ENCODE measurements at regions of chr1 and their contacts with region 1.

Region 1: GRCh38 chr1:112565800-112566199 is 53.1 kb downstream of the ST7L start:
- DNase-seq: no peak
- H3K4me3 ChIP-seq: no peak overlapping the region
- H3K27ac ChIP-seq: no peak overlapping the region
- H3K4me1 ChIP-seq: no peaks in the 10 kb centered on the region
- H3K27me3 ChIP-seq: no peaks in the 10 kb centered on the region
- CTCF ChIP-seq: no peak

Region 2: DNA sequence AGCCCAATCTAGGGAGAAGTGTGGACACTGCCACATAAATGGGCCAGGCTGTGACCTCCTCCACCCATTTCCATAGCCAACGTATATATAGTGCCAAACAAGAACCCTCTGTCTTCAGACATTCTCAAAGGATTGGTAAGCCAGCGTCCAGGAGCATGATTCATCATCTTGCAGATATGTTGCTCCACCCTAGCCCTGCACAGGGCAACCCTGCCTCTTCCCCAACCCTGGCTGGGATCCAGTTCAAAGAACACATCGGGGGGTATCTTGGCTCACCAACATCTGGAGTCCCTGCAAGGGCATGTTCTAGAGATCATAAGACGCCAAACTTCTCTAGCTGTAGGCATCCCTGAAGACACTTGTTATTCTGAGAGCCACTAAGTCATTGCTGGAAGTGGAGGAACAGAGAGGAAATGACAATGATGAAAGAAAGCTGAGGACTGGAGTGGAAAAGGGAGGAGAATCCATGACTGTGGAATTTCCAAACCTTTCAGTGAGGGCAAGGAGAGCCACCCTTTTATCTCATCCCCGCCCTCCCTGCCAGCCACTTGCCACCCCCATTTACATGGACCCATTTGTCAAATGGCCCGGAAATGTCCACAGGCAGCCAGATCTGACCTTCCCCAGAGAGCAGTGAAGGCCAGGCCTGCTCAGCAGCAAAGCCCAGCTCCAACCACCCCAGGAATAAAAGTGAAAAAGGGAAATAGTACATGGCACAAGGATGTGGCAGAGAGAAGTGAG is 313.9 kb before region 1 on chr1:
- CTCF ChIA-PET with region 1: no interaction called
- dilution Hi-C with region 1: no loop called
- in situ Hi-C with region 1: no loop called
- intact Hi-C with region 1: no loop called
- DNase-seq: peak; percentile 88
- H3K4me3 ChIP-seq: no peak overlapping the region
- H3K27ac ChIP-seq: peak overlapping the region; percentile 84
- H3K4me1 ChIP-seq: peaks cover 18% of the 10 kb centered on the region
- H3K27me3 ChIP-seq: no peaks in the 10 kb centered on the region
- CTCF ChIP-seq: no peak

Region 3: GRCh38 chr1:112549590-112549989 is 16.2 kb before region 1 on chr1:
- CTCF ChIA-PET with region 1: interaction called, 30 read pairs
- dilution Hi-C with region 1: no loop called
- in situ Hi-C with region 1: no loop called
- intact Hi-C with region 1: no loop called
- DNase-seq: no peak
- H3K4me3 ChIP-seq: no peak overlapping the region
- H3K27ac ChIP-seq: no peak overlapping the region
- H3K4me1 ChIP-seq: peaks cover 5% of the 10 kb centered on the region
- H3K27me3 ChIP-seq: no peaks in the 10 kb centered on the region
- CTCF ChIP-seq: no peak